ENCODE measurements at regions of chrX and their contacts with region 1.

Region 1: GRCh38 chrX:30652527-30653414 is 452 bp upstream of the GK start:
- DNase-seq: peak; percentile 79 to 93 (median 89)
- ATAC-seq: peak; percentile 89
- H3K4me3 ChIP-seq: peak overlapping the region; percentile 83 to 84
- H3K4me3 Mint-ChIP-seq: peak overlapping the region; percentile 90
- H3K27ac ChIP-seq: peak overlapping the region; percentile 68 to 70
- H3K27ac Mint-ChIP-seq: peak overlapping the region; percentile 91
- H3K4me1 ChIP-seq: peaks cover 3% of the 10 kb centered on the region
- H3K4me1 Mint-ChIP-seq: peaks cover 15% of the 10 kb centered on the region
- H3K27me3 ChIP-seq: no peaks in the 10 kb centered on the region
- H3K27me3 Mint-ChIP-seq: no peaks in the 10 kb centered on the region
- CTCF ChIP-seq: no peak

Region 2: DNA sequence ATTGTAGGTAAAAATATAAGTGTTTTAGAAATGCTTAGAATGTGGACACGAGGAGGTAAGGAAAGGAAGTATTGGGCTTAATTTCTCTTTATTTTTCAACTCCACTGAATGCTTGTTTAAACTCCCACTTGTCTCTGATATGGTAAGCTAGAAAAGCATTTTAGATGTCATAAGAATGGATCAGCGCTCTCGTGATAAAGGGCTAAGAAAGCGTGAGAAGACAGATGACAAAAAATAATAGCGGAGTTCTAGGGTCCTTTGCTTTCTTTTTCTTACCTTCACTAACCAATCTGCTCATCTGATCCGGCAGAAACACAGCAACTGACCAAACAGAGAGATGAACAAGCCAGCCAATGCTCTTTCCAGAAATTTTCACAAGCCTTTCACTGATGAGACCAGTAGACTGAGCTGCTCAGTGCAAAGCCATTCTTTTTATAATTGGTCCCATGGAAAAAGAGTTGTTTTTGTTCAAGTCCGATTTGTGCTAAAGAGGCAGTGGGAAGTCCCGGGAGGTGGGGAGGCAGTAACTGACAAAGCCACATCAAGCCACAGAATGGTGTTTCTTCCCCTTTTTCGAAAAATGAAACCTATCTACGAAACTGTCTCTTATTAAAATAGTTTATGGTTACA is 75.3 kb before region 1 on chrX and contains the start of gene TASL:
- CTCF ChIA-PET with region 1: no interaction called
- POLR2A ChIA-PET with region 1: no interaction called
- intact Hi-C with region 1: loop called (anchors 1 to 5 kb)
- DNase-seq: peak in 6 of 9 experiments; percentile 1 to 75 (median 26)
- ATAC-seq: peak; percentile 86
- H3K4me3 ChIP-seq: peak within 1 kb of the TSS; percentile 46 to 48
- H3K4me3 Mint-ChIP-seq: peak within 1 kb of the TSS; percentile 89
- H3K27ac ChIP-seq: peak within 1 kb of the TSS; percentile 61 to 67
- H3K27ac Mint-ChIP-seq: peak within 1 kb of the TSS; percentile 89
- H3K4me1 ChIP-seq: peaks cover 4% of the 10 kb centered on the region
- H3K4me1 Mint-ChIP-seq: peaks cover 22% of the 10 kb centered on the region
- H3K27me3 ChIP-seq: no peaks in the 10 kb centered on the region
- H3K27me3 Mint-ChIP-seq: no peaks in the 10 kb centered on the region
- CTCF ChIP-seq: no peak
- total RNA-seq, gene TASL: 0.22 to 0.31 TPM

Region 3: GRCh38 chrX:30589146-30589888 is 63.5 kb before region 1 on chrX:
- CTCF ChIA-PET with region 1: no interaction called
- POLR2A ChIA-PET with region 1: no interaction called
- intact Hi-C with region 1: no loop called
- DNase-seq: no peak
- ATAC-seq: no peak
- H3K4me3 ChIP-seq: no peak overlapping the region
- H3K4me3 Mint-ChIP-seq: no peak overlapping the region
- H3K27ac ChIP-seq: no peak overlapping the region
- H3K27ac Mint-ChIP-seq: no peak overlapping the region
- H3K4me1 ChIP-seq: no peaks in the 10 kb centered on the region
- H3K4me1 Mint-ChIP-seq: peaks cover 3% of the 10 kb centered on the region
- H3K27me3 ChIP-seq: no peaks in the 10 kb centered on the region
- H3K27me3 Mint-ChIP-seq: no peaks in the 10 kb centered on the region
- CTCF ChIP-seq: no peak

Region 4: GRCh38 chrX:30889147-30890140 is 236.7 kb after region 1 on chrX and contains the start of gene TAB3:
- CTCF ChIA-PET with region 1: no interaction called
- POLR2A ChIA-PET with region 1: no interaction called
- intact Hi-C with region 1: loop called in 1 of 2 experiments (anchors 1 kb)
- DNase-seq: peak; percentile 85 to 96 (median 92)
- ATAC-seq: peak; percentile 90
- H3K4me3 ChIP-seq: peak within 1 kb of the TSS; percentile 61 to 70
- H3K4me3 Mint-ChIP-seq: peak within 1 kb of the TSS; percentile 91
- H3K27ac ChIP-seq: peak within 1 kb of the TSS; percentile 83 to 87
- H3K27ac Mint-ChIP-seq: peak within 1 kb of the TSS; percentile 95
- H3K4me1 ChIP-seq: peaks cover 20% of the 10 kb centered on the region
- H3K4me1 Mint-ChIP-seq: peaks cover 39% of the 10 kb centered on the region
- H3K27me3 ChIP-seq: no peaks in the 10 kb centered on the region
- H3K27me3 Mint-ChIP-seq: no peaks in the 10 kb centered on the region
- CTCF ChIP-seq: no peak
- total RNA-seq, gene TAB3: 21.5 to 25.9 TPM